WTC11 (cell line): ENCODE measurements at regions of chr4 and their contacts with region 1.

Region 1: GRCh38 chr4:189117426-189117825 is 823.2 kb upstream of the FRG1 start:
- DNase-seq: peak; percentile 26
- ATAC-seq: peak; percentile 71
- H3K4me3 Mint-ChIP-seq: no peak overlapping the region
- H3K27ac Mint-ChIP-seq: no peak overlapping the region
- H3K4me1 Mint-ChIP-seq: peaks cover 11% of the 10 kb centered on the region
- H3K27me3 Mint-ChIP-seq: no peaks in the 10 kb centered on the region
- CTCF ChIP-seq: no peak

Region 2: DNA sequence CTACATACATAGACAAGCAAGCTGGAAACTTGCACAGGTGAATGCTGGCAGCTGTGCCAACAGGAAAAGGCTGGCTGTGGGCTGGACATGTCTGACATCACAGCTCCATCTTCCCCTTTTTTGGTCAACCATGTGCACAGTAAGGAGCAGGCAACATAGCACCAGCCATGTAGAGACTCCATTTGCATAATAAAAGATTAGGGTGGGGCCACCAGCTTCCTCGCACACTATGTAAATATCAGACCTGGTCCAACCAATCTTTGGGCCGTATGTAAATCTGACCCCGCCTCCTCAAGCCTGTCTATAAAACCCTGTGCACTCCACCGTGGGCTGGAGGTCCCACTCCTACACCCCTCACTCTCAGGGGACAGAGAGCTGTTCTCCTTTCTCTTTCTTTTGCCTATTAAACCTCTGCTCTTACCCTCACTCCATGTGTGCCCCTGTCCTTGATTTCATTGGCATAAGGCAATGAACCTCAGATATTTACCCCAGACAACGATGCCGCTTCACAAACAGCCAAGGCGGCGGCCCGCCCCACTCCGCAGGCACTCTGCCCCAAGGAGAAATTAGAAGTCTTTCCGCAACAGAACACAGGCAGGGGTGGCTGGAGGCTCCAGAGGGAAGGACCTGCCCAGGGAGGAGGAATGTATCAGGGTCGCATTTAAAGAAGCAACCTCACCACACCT is 116.0 kb before region 1 on chr4:
- CTCF ChIA-PET with region 1: no interaction called
- POLR2A ChIA-PET with region 1: no interaction called
- DNase-seq: no peak
- ATAC-seq: peak; percentile 47
- H3K4me3 Mint-ChIP-seq: no peak overlapping the region
- H3K27ac Mint-ChIP-seq: no peak overlapping the region
- H3K4me1 Mint-ChIP-seq: peaks cover 8% of the 10 kb centered on the region
- H3K27me3 Mint-ChIP-seq: no peaks in the 10 kb centered on the region
- CTCF ChIP-seq: no peak

Region 3: DNA sequence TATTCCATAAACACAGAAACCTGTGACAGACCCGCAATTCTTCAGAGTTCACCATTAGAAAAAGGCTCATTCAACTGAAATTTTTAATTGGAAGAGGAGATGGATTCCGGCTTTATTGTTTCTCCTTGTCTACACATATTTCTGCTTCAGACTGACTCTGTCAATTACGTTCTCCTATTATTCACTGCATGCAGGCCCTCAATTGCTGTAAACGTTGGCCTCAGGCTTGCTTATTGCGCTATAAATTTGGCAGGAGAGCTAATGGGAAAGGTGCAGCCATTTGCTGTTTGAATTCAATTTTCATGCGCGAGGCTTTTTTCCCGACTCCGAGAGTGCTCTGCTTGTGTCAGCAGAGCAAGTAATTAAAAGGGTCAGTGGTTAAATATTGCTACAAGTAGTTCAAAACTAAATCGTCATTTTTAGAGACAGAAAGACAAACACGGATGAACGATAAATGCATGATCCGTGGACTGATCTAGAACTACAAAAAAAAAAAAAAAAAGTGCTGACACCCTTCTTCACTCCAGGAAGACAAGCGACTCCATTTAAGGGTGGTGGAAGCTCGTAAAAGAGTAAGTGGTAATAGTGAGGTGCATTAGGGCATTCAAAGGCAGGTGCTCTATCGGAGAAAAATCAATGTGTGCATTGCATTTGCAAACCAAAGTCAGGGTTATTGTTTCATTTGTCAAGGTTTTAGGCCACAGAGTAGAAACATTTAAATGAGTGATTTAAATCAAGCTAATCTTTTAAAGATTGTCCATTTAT is 18.3 kb before region 1 on chr4:
- CTCF ChIA-PET with region 1: interaction called, 10 read pairs
- POLR2A ChIA-PET with region 1: no interaction called
- DNase-seq: no peak
- ATAC-seq: no peak
- H3K4me3 Mint-ChIP-seq: no peak overlapping the region
- H3K27ac Mint-ChIP-seq: no peak overlapping the region
- H3K4me1 Mint-ChIP-seq: peaks cover 11% of the 10 kb centered on the region
- H3K27me3 Mint-ChIP-seq: no peaks in the 10 kb centered on the region
- CTCF ChIP-seq: no peak

Region 4: DNA sequence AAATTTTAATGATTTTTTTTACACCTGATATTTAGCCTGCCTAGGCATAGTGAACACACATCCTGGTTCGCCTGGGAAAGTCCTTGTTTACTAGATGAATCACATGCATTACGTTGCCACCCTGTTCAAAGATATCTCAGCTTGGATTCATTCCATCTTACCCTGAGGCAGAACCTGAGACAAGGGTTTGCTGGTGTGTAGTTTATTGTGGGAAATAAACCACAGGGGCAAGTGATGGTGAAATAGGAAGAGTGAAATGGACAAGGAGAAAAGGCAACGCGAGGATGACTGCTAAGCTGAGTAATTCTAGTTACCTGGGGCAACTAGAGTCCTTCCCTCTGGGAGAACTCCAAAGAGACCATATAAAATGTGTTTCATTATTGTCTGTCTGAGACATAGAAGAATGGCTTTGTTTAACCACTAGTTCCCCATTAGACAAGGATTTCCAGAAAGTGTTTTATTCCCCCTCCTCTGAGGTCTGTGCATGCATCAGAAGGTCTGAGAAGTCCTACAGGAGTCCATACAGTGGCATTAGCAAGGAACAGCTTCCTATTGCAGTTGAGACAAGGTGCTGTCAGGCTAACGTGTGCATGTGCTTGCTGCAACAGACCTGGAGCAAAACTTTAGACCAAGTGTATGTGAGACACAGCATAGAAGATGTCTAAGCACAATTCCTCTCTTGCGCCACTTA is 26.0 kb after region 1 on chr4:
- CTCF ChIA-PET with region 1: no interaction called
- POLR2A ChIA-PET with region 1: no interaction called
- DNase-seq: no peak
- ATAC-seq: no peak
- H3K4me3 Mint-ChIP-seq: no peak overlapping the region
- H3K27ac Mint-ChIP-seq: no peak overlapping the region
- H3K4me1 Mint-ChIP-seq: no peaks in the 10 kb centered on the region
- H3K27me3 Mint-ChIP-seq: no peaks in the 10 kb centered on the region
- CTCF ChIP-seq: no peak